Psoas muscle (tissue), 8 donors: ENCODE measurements at regions of chr1 and their contacts with region 1.

Region 1: DNA sequence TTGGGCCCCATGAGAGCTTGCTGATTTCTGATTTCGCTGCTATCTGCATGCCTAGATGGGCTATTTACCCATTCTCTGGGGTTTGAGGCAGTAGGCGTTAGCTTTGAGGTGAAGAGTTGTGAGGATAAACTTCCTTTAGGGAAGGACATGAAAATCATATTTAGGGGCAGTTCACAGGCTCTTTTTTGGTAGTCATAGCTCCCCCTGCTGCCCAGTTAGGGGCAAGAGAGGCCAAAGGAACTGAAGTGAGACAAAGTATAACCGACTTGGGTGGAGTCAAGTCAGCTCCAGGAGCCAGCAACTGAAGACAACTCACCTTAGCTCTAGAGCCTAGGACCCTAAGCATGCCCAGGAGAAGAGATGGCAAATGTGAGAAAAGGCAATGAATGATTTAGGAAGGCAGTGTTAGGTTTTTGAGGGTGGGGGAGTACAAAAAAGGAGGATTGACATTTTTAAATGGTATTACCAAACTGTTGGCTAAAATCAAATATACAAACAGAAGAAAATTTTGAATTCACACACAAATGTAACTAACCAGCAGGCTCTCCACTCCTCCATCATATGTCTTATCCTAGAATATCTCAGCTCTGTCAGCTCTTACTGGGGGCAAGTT is 625.2 kb downstream of the LMO4 start:
- DNase-seq: peak; percentile 33 to 64
- ATAC-seq: peak in 3 of 4 donors; percentile 64 to 83 (median 67)
- H3K4me3 ChIP-seq: no peak overlapping the region
- H3K27ac ChIP-seq: no peak overlapping the region
- H3K4me1 ChIP-seq: no peaks in the 10 kb centered on the region
- H3K27me3 ChIP-seq: no peaks in the 10 kb centered on the region
- CTCF ChIP-seq: peak; percentile 82

Region 2: GRCh38 chr1:87131809-87132283 is 822.0 kb before region 1 on chr1:
- intact Hi-C with region 1: loop called in 1 of 2 experiments (anchors 10 kb)
- DNase-seq: peak; percentile 75 to 88
- ATAC-seq: peak; percentile 86 to 93 (median 90)
- H3K4me3 ChIP-seq: peak overlapping the region; percentile 60
- H3K27ac ChIP-seq: no peak overlapping the region
- H3K4me1 ChIP-seq: no peaks in the 10 kb centered on the region
- H3K27me3 ChIP-seq: peaks cover 0 to 3% (median 0%) of the 10 kb centered on the region in 3 donors
- CTCF ChIP-seq: peak; percentile 84

Region 3: GRCh38 chr1:87149666-87150065 is 804.2 kb before region 1 on chr1:
- intact Hi-C with region 1: loop called in 1 of 2 experiments (anchors 10 kb)
- DNase-seq: no peak
- ATAC-seq: no peak
- H3K4me3 ChIP-seq: no peak overlapping the region
- H3K27ac ChIP-seq: peak overlapping the region; percentile 9
- H3K4me1 ChIP-seq: no peaks in the 10 kb centered on the region
- H3K27me3 ChIP-seq: no peaks in the 10 kb centered on the region
- CTCF ChIP-seq: no peak

Region 4: DNA sequence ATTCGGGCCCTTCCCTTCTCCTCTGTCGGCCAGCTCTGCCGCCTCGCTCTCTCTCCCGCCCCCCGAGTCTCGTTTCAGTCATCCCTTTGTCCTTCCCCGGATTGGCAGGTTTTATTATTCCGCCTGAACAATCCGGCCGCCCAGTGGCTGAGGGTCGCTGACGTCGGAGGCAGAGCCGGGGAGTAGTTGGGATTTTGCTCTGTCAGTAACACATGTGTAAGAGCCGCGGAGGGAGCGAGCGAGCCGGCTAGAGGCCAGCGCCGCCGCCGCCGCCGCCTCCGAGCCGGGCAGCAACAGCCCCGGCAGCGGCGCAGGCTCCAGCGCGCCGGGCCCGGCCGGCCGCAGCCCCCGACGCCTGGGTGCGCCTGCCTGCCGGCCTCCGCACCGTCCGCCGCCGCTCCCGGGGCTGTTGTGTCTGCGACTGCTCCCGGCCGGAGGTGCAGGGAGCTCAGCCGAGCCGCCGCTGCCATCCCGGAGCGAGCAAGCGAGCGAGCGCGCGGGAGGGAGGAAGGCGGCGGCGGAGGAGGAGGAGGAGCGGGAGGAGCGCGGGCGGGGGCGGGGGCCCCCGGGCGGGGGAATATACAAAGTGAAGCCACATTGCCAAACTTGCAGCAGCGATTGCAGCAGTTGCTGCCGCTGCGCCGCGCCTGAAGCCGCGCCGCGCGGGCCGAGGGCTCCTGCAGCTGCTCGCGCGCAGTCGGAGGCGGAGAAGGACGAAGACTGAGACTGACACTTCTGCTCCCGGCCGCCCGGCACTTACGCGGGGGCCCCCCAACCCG is 625.4 kb before region 1 on chr1 and contains the start of gene LMO4:
- intact Hi-C with region 1: loop called (anchors 5 to 10 kb)
- DNase-seq: peak; percentile 96 to 97
- ATAC-seq: peak; percentile 86 to 95 (median 92)
- H3K4me3 ChIP-seq: peak within 1 kb of the TSS; percentile 71
- H3K27ac ChIP-seq: peak within 1 kb of the TSS; percentile 92
- H3K4me1 ChIP-seq: peaks cover 14% of the 10 kb centered on the region
- H3K27me3 ChIP-seq: no peaks in the 10 kb centered on the region
- CTCF ChIP-seq: no peak
- total RNA-seq, gene LMO4: 25.2 to 32.3 (median 28.3) TPM

Region 5: DNA sequence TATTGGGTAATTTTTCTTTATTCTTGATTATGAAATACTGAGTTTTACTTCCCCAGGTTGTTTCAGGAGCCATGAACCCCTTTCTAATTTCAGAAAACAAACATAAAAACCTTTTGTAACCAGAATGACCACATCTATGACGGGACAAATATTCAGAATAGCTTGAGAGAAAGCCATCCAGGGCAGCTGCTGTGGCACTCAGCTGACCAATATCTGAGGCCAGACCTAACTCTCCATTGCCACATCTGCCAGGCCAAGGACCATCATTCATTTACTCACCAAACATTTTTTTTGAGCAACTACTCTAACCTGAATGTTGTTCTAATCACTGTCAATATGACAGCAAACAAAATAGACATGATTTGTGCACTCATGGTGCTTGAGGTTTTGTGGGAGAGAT is 122.0 kb after region 1 on chr1:
- intact Hi-C with region 1: no loop called
- DNase-seq: no peak
- ATAC-seq: no peak
- H3K4me3 ChIP-seq: no peak overlapping the region
- H3K27ac ChIP-seq: no peak overlapping the region
- H3K4me1 ChIP-seq: no peaks in the 10 kb centered on the region
- H3K27me3 ChIP-seq: no peaks in the 10 kb centered on the region
- CTCF ChIP-seq: no peak